PC-3 (cell line): ENCODE measurements at regions of chr3 and their contacts with region 1.

Region 1: GRCh38 chr3:136752422-136753325 is 496 bp upstream of the STAG1 start:
- DNase-seq: peak; percentile 96
- ATAC-seq: peak; percentile 88
- H3K4me3 ChIP-seq: peak overlapping the region; percentile 81
- H3K27ac ChIP-seq: peak overlapping the region; percentile 94
- H3K4me1 ChIP-seq: peaks cover 9% of the 10 kb centered on the region
- H3K27me3 ChIP-seq: no peaks in the 10 kb centered on the region
- CTCF ChIP-seq: no peak

Region 2: DNA sequence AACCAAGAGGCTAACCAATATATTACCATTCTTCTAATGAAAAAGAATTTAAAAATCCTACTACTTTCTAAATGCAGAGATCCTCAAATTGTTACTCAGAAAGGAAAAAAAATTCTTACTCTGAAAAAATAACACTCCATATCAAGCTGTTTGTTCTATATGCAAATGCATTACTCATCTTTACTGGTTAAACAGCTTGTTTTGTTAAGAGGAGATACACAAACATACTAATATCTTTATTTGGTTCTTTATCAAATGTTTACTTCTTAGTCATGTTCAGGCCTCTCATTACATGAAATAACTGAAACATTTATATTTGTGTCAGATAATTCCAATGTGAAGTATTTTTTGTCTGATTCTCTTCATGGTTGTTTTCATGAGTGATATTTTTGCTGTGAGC is 355.8 kb before region 1 on chr3:
- CTCF ChIA-PET with region 1: interaction called, 27 read pairs
- POLR2A ChIA-PET with region 1: interaction called, 5 read pairs
- intact Hi-C with region 1: no loop called
- DNase-seq: no peak
- ATAC-seq: peak; percentile 42; the same call in 1 of the 2 replicates
- H3K4me3 ChIP-seq: no peak overlapping the region
- H3K27ac ChIP-seq: no peak overlapping the region
- H3K4me1 ChIP-seq: peaks cover 4% of the 10 kb centered on the region; the same call in 1 of the 2 replicates
- H3K27me3 ChIP-seq: no peaks in the 10 kb centered on the region
- CTCF ChIP-seq: no peak

Region 3: GRCh38 chr3:136617198-136617597 is 135.5 kb before region 1 on chr3:
- CTCF ChIA-PET with region 1: no interaction called
- POLR2A ChIA-PET with region 1: no interaction called
- intact Hi-C with region 1: no loop called
- DNase-seq: no peak
- ATAC-seq: no peak
- H3K4me3 ChIP-seq: no peak overlapping the region
- H3K27ac ChIP-seq: no peak overlapping the region
- H3K4me1 ChIP-seq: peaks cover 6% of the 10 kb centered on the region
- H3K27me3 ChIP-seq: no peaks in the 10 kb centered on the region
- CTCF ChIP-seq: no peak

Region 4: GRCh38 chr3:136632625-136633081 is 120.0 kb before region 1 on chr3:
- CTCF ChIA-PET with region 1: interaction called, 3 read pairs
- POLR2A ChIA-PET with region 1: no interaction called
- intact Hi-C with region 1: loop called (anchors 2 kb)
- DNase-seq: peak; percentile 92
- ATAC-seq: peak; percentile 91
- H3K4me3 ChIP-seq: peak overlapping the region; percentile 48
- H3K27ac ChIP-seq: peak overlapping the region; percentile 89
- H3K4me1 ChIP-seq: peaks cover 25% of the 10 kb centered on the region
- H3K27me3 ChIP-seq: no peaks in the 10 kb centered on the region
- CTCF ChIP-seq: no peak

Region 5: GRCh38 chr3:136869282-136869681 is 116.6 kb after region 1 on chr3:
- CTCF ChIA-PET with region 1: no interaction called
- POLR2A ChIA-PET with region 1: no interaction called
- intact Hi-C with region 1: no loop called
- DNase-seq: no peak
- ATAC-seq: no peak
- H3K4me3 ChIP-seq: no peak overlapping the region
- H3K27ac ChIP-seq: no peak overlapping the region
- H3K4me1 ChIP-seq: no peaks in the 10 kb centered on the region
- H3K27me3 ChIP-seq: no peaks in the 10 kb centered on the region
- CTCF ChIP-seq: no peak

Region 6: DNA sequence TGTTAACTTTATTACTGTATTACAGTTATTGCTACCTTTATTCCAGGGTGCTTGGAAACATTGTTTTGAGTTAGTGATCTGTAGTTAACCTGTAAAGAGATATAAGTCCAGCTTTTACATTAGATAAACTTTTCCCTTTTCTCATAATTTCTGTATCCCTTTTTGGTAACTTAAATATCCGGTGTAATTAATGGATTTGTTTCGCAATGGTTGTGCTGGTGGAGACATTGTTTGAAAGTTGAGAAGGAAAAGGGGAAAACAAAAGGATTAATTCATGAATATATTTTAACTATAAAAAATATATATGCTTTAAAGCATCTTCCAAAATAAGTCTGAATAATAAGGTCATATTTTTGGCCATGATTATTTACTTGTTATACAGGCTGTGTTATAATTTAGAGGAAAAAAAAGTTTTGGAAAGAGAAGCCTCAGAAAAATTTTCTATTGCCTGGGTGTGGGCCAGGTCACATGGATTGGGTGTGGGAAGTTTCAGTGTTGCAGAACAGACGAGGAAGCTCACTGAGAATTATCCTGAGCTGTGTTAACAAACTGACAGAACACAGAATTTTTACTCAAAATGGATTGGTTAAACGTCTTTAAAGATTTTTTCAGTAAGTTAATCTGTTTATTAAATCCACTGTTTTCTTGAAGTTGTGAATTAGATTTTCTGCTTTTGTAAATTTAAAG is 177.5 kb after region 1 on chr3:
- CTCF ChIA-PET with region 1: no interaction called
- POLR2A ChIA-PET with region 1: no interaction called
- intact Hi-C with region 1: loop called (anchors 10 kb)
- DNase-seq: no peak
- ATAC-seq: no peak
- H3K4me3 ChIP-seq: no peak overlapping the region
- H3K27ac ChIP-seq: peak overlapping the region; percentile 73
- H3K4me1 ChIP-seq: peaks cover 16% of the 10 kb centered on the region
- H3K27me3 ChIP-seq: no peaks in the 10 kb centered on the region
- CTCF ChIP-seq: no peak